Activated T-helper 2 cell treated with anti-CD3 and anti-CD28 coated beads, Interferon-gamma antibody, Interleukin-2, Interleukin-4, amounts not matched to agents 10 μg/mL and 5 μg/mL and 100 μg/mL, durations not matched to agents 14 hours and 24 hours and 36 hours (primary cell): ENCODE measurements at regions of chr11 and their contacts with region 1.

Region 1: DNA sequence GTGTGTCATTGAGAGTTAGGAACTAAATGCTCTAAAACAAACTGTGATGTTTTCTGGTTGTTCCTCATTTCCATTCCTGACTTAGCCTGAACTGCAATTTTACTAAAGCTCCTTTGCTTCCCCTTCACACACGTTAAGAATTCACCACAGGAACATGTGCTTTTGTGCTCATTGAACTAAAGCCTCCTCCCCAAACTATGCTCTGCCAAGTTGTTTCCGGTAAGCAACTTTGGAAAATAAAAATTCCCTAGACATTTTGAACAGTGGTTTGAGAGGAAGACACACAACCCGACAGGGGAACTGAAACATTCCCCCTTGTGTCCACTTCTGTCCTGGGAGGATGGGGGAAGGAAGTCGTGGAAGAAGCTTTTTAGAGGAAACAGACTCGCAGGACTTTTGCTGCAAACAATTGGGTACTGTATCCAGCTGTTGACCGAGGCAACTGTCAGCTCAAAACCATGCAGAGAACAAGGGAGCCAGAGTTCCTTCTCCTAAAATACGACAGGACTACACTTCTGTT is 66.9 kb downstream of the GAB2 start:
- DNase-seq: no peak
- H3K4me3 Mint-ChIP-seq: peak overlapping the region; percentile 64
- H3K27ac Mint-ChIP-seq: peak overlapping the region; percentile 88
- H3K4me1 Mint-ChIP-seq: peaks cover 84% of the 10 kb centered on the region
- H3K27me3 Mint-ChIP-seq: no peaks in the 10 kb centered on the region

Region 2: DNA sequence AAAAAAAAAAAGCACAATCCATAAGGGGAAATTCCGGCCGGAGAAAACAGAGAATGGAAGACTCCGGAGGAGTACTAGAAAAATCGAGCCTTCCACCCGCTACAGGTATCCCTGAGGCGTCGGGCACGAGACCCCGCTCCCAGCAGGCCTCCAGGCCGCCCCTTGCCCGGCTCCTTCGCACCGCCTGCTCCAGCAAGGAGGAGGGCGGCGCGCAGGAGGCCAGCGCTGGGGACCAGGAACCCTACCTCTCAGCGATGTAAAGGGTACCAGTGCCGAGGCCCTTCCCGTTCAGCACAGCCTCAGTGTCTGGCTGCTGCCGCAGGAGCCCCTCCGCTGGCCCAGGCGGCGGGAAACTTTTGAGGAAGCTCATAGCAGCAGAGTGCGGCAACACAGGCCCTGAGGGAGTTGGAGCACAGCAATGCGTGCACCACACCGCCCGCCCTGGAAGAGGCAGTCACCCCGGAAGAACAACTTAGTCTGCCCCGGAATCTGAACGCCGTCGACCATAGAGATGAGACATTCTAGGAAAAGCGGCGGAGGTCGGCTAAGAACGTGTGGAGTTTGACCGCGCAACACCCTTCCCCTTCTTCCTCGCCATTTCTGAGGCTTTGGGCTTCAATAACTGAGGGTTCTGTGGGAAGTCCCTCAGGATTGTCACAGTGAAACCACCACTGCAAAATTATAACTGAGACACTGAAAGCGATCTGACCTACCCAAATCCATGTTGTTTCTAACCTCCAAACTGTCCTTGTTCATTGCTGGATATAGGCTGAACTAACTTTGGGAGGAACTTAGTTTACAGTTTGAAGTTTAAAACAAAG is 713.2 kb before region 1 on chr11 and contains the start of gene CLNS1A:
- intact Hi-C with region 1: loop called (anchors 10 kb)
- DNase-seq: peak; percentile 76
- H3K4me3 Mint-ChIP-seq: peak within 1 kb of the TSS; percentile 90
- H3K27ac Mint-ChIP-seq: peak within 1 kb of the TSS; percentile 91
- H3K4me1 Mint-ChIP-seq: peaks cover 27% of the 10 kb centered on the region
- H3K27me3 Mint-ChIP-seq: no peaks in the 10 kb centered on the region
- total RNA-seq, gene CLNS1A: 153 and 157 TPM in 2 replicates

Region 3: DNA sequence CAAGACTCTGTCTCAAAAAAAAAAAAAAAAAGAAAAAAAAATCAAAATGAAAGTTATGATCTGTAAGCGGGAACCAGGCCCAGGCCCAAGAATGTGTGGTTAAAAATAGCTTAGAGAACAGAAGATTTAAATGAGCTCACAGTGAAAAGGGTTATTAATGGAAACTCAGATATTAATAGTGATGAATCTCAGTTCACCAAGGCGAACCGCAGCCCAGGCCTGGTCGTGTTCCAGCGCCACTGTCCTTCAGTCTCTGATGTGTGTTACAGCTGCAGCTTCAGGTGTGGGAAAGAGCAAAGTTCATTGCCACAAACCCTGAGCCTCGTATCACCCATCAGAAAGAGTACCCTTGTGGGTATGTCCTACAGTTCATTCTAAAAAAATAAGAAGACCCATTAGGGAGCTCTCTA is 40.2 kb before region 1 on chr11:
- intact Hi-C with region 1: loop called (anchors 5 kb)
- DNase-seq: no peak
- H3K4me3 Mint-ChIP-seq: peak overlapping the region; percentile 38
- H3K27ac Mint-ChIP-seq: peak overlapping the region; percentile 49
- H3K4me1 Mint-ChIP-seq: peaks cover 77% of the 10 kb centered on the region
- H3K27me3 Mint-ChIP-seq: no peaks in the 10 kb centered on the region